ENCODE measurements at regions of chr22 and their contacts with region 1.

Region 1: DNA sequence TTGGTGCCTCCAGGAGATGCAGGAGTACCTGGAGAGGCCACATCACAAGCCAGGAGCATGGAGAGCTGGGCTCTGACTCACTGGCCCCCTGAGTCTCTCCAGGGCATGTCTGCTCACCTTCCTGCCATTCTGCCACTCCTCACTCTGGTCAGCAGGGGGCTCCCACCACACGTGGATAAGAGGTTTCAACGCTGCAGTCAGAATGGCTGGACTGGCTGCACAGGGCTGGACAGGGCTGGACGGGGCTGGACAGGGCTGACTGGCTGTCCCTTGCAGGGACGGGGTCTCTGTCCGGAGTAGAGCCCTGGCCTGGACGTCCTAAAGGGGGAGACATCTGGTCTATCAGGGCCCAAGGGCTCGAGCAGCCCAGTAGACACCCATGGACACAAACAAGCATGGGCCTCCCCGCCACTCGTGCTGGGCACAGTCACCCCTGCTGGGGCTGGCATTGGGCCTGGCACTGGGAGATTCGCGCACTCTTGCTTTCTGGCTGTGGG is 34.6 kb downstream of the CYTH4 start:
- DNase-seq: peak; percentile 63 to 69
- ATAC-seq: peak; percentile 76 to 87 (median 81)
- H3K4me3 ChIP-seq: no peak overlapping the region
- H3K27ac ChIP-seq: no peak overlapping the region
- H3K4me1 ChIP-seq: no peaks in the 10 kb centered on the region
- H3K27me3 ChIP-seq: peaks cover 0 to 30% (median 17%) of the 10 kb centered on the region in 3 donors
- CTCF ChIP-seq: peak; percentile 66

Region 2: GRCh38 chr22:37229805-37230672 is 86.9 kb before region 1 on chr22:
- intact Hi-C with region 1: no loop called
- DNase-seq: peak in 1 of 2 donors; percentile 72
- ATAC-seq: peak in 2 of 4 donors; percentile 28 to 36
- H3K4me3 ChIP-seq: no peak overlapping the region
- H3K27ac ChIP-seq: no peak overlapping the region
- H3K4me1 ChIP-seq: no peaks in the 10 kb centered on the region
- H3K27me3 ChIP-seq: peaks cover 0 to 46% (median 6%) of the 10 kb centered on the region in 3 donors
- CTCF ChIP-seq: no peak

Region 3: GRCh38 chr22:37428649-37429586 is 112.0 kb after region 1 on chr22:
- intact Hi-C with region 1: loop called in 1 of 2 experiments (anchors 10 kb)
- DNase-seq: no peak
- ATAC-seq: no peak
- H3K4me3 ChIP-seq: no peak overlapping the region
- H3K27ac ChIP-seq: no peak overlapping the region
- H3K4me1 ChIP-seq: no peaks in the 10 kb centered on the region
- H3K27me3 ChIP-seq: peaks cover 0 to 93% (median 38%) of the 10 kb centered on the region in 3 donors
- CTCF ChIP-seq: peak; percentile 45

Region 4: GRCh38 chr22:37457093-37457893 is 140.4 kb after region 1 on chr22:
- intact Hi-C with region 1: loop called (anchors 2 to 5 kb)
- DNase-seq: peak; percentile 52 to 74
- ATAC-seq: peak in 3 of 4 donors; percentile 46 to 59 (median 49)
- H3K4me3 ChIP-seq: no peak overlapping the region
- H3K27ac ChIP-seq: no peak overlapping the region
- H3K4me1 ChIP-seq: no peaks in the 10 kb centered on the region
- H3K27me3 ChIP-seq: peaks cover 0 to 53% (median 8%) of the 10 kb centered on the region in 3 donors
- CTCF ChIP-seq: peak; percentile 68

Region 5: DNA sequence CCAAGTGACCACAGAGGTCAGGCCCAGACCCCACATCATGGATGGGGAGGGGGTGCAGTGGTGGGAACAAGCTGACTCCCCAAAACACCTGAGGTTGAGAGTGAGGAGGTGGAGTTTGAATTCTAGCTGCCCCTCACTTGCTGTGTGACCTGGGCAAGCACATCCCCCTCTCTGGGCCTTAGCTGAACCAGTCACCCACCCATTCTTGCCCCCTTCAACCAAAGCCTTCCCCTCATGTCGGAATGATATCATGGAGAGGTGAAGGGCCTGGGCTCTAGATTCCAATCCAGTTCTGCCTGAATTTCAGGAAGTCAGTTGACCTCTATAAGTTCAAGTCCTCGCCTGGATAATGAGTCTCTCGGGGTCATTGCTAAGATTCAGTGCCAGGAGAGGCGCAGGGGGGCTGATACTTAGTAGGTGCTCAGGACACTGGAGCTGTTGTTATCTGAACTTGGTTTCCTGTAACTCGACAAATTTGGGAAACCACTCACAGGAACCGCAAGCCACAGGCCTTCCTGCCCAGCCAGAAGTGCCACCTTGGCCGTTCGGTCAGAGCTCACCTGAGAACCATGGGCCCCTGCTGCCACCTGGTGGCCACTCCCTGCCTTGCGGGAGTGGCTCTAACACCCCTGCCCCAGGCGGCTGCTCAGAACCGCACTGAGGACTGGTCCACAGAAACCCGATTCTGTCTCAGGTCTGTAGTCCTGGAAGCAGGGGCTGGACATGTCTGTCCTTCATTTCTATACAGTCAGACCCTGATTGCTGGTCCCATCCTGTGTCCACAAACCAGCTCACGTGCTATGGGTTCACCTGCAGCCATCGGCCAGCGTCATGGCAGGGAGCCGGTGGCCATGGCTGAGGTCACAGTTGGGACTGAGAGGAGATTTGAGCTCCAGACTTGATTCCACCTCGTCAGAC is 250.2 kb after region 1 on chr22:
- intact Hi-C with region 1: loop called in 1 of 2 experiments (anchors 10 kb)
- DNase-seq: peak; percentile 80 to 89
- ATAC-seq: peak; percentile 74 to 88 (median 87)
- H3K4me3 ChIP-seq: no peak overlapping the region
- H3K27ac ChIP-seq: no peak overlapping the region
- H3K4me1 ChIP-seq: peaks cover 28% of the 10 kb centered on the region
- H3K27me3 ChIP-seq: peaks cover 0 to 20% (median 2%) of the 10 kb centered on the region in 3 donors
- CTCF ChIP-seq: peak; percentile 91

Measured in psoas muscle (tissue), 8 donors.